Right ventricle myocardium inferior (tissue), 1 donor: ENCODE measurements at regions of chr7 and their contacts with region 1.

Region 1: DNA sequence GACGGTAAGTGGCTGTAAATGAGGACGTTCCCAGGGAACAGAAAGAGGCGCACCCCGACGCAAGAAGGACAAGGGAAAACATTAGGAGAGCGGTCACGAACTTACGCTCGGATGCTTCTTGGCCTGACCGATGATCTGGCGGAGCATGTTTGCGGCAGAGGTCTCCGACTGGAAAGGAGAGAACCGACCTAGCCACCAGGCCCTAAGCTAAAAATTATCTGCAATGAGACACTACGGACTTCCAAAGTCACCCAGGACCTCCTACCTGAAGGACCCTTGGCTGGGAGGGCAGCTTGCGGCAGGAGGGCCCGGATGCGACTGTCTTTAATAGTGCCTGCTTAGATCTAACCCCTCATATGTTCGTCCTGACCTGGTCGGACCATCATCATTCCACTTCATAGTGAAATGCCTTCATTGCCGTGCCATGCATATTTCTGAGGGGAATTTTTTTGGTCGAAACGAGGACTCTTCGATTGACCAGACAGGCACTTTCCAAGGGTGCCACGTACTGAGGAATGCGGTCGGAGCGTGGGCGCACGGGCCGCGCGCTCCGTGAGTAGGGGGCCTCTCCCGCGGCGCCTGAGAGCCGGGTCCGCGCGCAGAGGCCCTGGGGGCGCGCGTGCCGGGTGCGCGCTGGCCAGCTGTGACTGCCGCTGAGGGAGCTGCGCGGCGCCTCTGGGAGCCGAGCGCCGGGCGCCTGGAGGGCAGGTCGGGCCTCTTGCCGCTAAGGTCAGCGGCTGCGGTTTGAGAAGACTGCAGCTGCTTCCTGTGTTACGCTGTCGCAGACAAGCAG is 33.6 kb upstream of the PHF14 start:
- DNase-seq: peak; percentile 93
- ATAC-seq: peak; percentile 99

Region 2: DNA sequence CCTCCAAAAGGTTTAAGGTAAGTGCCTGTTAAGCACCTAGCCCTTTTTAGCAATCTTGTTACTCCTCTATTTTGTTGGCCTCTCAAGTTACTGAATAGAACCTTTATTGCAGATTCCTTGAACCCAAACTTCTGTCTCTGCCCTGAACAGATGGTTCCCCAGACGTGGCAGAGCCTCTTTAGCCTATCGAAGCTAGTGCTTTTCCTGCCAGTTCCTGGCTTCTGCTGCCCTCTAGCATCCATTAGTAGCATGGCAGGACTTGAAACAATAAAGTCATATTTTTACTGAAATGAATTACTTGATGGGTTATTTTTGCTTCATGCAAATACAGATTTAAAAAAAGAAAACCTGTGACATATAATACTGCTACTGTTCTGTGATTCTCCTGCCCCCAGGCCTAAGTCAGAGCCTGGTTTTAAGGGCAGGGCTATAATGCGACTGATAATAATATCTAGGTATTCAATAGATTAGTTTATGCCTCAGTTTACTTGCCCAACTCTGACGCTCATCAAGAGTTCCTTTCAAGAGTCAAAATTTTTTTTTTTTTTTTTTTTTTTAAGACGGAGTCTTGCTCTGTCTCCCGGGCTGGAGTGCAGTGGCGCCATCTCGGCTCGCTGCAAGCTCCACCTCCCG is 50.7 kb before region 1 on chr7:
- intact Hi-C with region 1: no loop called
- DNase-seq: no peak
- ATAC-seq: no peak

Region 3: GRCh38 chr7:10973061-10973944 is 33.2 kb after region 1 on chr7 and contains the start of gene PHF14:
- intact Hi-C with region 1: loop called (anchors 1 kb)
- DNase-seq: peak; percentile 98
- ATAC-seq: peak; percentile 100
- total RNA-seq, gene PHF14: 16.0 TPM

Region 4: DNA sequence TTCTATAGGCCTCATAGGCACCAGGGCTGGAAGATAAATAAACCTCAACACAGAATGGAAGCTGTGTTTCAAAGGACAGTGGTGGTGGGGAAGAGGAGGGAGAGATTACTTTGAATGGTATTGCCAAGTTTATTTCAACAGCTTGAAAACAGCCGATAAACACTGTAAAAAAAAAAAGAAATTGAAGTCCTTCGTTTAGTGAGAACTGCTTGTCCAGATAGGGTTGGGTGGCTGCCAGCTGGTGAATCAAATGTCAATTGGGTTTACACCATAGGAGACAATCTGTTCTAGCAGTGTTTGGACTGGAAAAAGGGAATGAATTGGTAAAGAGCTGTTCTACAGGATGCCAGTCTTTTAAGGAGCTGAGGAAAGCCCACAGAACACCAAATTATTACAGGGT is 288.4 kb after region 1 on chr7:
- intact Hi-C with region 1: loop called (anchors 5 kb)
- DNase-seq: peak; percentile 85
- ATAC-seq: peak; percentile 94